HCT116 (cell line): ENCODE measurements at regions of chr17 and their contacts with region 1.

Region 1: GRCh38 chr17:60599620-60600489 is at the start of gene PPM1D:
- DNase-seq: peak; percentile 99
- ATAC-seq: peak; percentile 91
- H3K4me3 ChIP-seq: peak within 1 kb of the TSS; percentile 79 to 89
- H3K27ac ChIP-seq: peak within 1 kb of the TSS; percentile 82
- H3K4me1 ChIP-seq: peaks cover 21 to 48% of the 10 kb centered on the region in 2 experiments
- H3K27me3 ChIP-seq: no peaks in the 10 kb centered on the region
- CTCF ChIP-seq: no peak
- POLR2A ChIP-seq: peak; percentile 96
- RAD21 ChIP-seq: no peak
- total RNA-seq, gene PPM1D: 29.1 TPM

Region 2: GRCh38 chr17:60142872-60143499 is 456.9 kb before region 1 on chr17:
- CTCF ChIA-PET with region 1: no interaction called
- POLR2A ChIA-PET with region 1: no interaction called
- RAD21 ChIA-PET with region 1: no interaction called
- intact Hi-C with region 1: loop called (anchors 10 kb)
- DNase-seq: peak; percentile 82
- ATAC-seq: peak; percentile 88
- H3K4me3 ChIP-seq: peak overlapping the region; percentile 15 to 26
- H3K27ac ChIP-seq: no peak overlapping the region
- H3K4me1 ChIP-seq: peaks cover 18 to 26% of the 10 kb centered on the region in 2 experiments
- H3K27me3 ChIP-seq: no peaks in the 10 kb centered on the region
- CTCF ChIP-seq: peak; percentile 91 to 96 (median 93)
- POLR2A ChIP-seq: no peak
- RAD21 ChIP-seq: peak; percentile 96

Region 3: GRCh38 chr17:60392042-60392844 is 207.6 kb before region 1 on chr17 and contains the start of gene USP32:
- CTCF ChIA-PET with region 1: no interaction called
- POLR2A ChIA-PET with region 1: interaction called, 3 read pairs
- RAD21 ChIA-PET with region 1: no interaction called
- intact Hi-C with region 1: loop called (anchors 1 kb)
- DNase-seq: peak; percentile 96
- ATAC-seq: peak; percentile 92
- H3K4me3 ChIP-seq: peak within 1 kb of the TSS; percentile 80 to 87
- H3K27ac ChIP-seq: peak within 1 kb of the TSS; percentile 94
- H3K4me1 ChIP-seq: peaks cover 19 to 32% of the 10 kb centered on the region in 2 experiments
- H3K27me3 ChIP-seq: no peaks in the 10 kb centered on the region
- CTCF ChIP-seq: peak in 1 of 3 experiments; percentile 39; a peak in 3 of 6 replicates
- POLR2A ChIP-seq: peak; percentile 71
- RAD21 ChIP-seq: no peak
- total RNA-seq, gene USP32: 67.0 TPM

Region 4: GRCh38 chr17:60573201-60574051 is 26.4 kb before region 1 on chr17:
- CTCF ChIA-PET with region 1: interaction called, 12 read pairs
- POLR2A ChIA-PET with region 1: interaction called, 3 read pairs
- RAD21 ChIA-PET with region 1: interaction called in 1 of 2 experiments, 5 read pairs
- intact Hi-C with region 1: no loop called
- DNase-seq: no peak
- ATAC-seq: no peak
- H3K4me3 ChIP-seq: no peak overlapping the region
- H3K27ac ChIP-seq: no peak overlapping the region
- H3K4me1 ChIP-seq: no peaks in the 10 kb centered on the region
- H3K27me3 ChIP-seq: no peaks in the 10 kb centered on the region
- CTCF ChIP-seq: no peak
- POLR2A ChIP-seq: no peak
- RAD21 ChIP-seq: no peak

Region 5: DNA sequence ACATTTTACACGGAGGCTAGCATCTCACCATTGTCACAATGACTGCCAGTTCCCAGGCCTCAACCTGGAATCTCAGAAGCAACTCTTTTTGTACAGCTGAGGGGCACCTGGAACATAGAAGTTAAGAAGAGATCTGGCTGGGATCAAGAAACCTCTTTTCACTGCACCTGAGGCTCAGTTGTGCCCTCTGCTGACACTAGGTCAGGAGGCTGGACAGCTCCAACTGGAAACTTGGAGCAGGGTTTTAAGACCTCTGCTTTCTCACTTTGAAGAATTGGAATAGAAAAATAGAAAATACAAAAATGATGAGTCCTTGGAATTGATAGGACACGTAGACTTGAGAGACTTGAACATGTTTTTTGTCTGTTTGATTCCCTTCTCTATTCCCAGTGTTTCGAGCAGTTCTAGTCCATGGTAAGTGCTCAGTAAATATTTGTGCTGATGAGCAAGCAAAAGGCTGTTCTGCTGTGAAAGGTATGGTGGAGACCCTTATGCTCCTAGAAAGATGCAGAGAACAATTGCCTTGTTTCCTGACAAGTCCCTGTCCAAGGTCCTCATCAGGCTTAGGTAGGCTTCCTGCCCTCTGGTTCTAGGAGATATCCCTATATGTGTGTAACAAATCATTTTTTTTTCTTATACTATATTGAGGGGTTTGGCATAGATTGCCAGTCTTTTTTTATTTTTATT is 13.4 kb before region 1 on chr17:
- CTCF ChIA-PET with region 1: interaction called, 12 read pairs
- POLR2A ChIA-PET with region 1: interaction called, 19 read pairs
- RAD21 ChIA-PET with region 1: no interaction called
- intact Hi-C with region 1: no loop called
- DNase-seq: no peak
- ATAC-seq: peak; percentile 86
- H3K4me3 ChIP-seq: no peak overlapping the region
- H3K27ac ChIP-seq: no peak overlapping the region
- H3K4me1 ChIP-seq: peaks cover 0 to 3% of the 10 kb centered on the region in 2 experiments; a peak in 1 of 4 replicates
- H3K27me3 ChIP-seq: no peaks in the 10 kb centered on the region
- CTCF ChIP-seq: peak; percentile 48 to 56 (median 50); a peak in 5 of 6 replicates
- POLR2A ChIP-seq: no peak
- RAD21 ChIP-seq: peak; percentile 59

Region 6: DNA sequence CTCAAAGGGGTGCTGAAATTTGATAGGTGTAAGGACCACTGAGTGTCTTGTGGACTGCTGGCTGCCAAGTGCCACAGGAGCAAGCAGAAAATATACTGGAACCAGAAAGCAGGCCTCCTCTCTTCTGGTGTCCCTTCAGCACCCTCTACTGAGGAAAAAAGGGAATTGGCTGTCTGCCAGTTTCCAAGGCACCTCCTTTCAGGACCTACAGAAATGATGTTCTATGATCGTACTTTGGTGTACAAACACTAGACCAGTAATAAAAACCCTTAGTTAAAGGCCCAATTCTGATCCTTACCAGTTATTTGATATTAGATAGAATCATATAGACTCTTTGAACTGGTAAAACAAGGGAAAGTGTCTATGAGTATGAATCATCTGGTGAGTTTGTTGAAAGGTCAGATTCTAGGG is 42.0 kb after region 1 on chr17:
- CTCF ChIA-PET with region 1: interaction called, 11 read pairs
- POLR2A ChIA-PET with region 1: interaction called, 4 read pairs
- RAD21 ChIA-PET with region 1: no interaction called
- intact Hi-C with region 1: no loop called
- DNase-seq: peak; percentile 78
- ATAC-seq: peak; percentile 79
- H3K4me3 ChIP-seq: no peak overlapping the region
- H3K27ac ChIP-seq: no peak overlapping the region
- H3K4me1 ChIP-seq: peaks cover 4 to 6% of the 10 kb centered on the region in 2 experiments; a peak in 3 of 4 replicates
- H3K27me3 ChIP-seq: no peaks in the 10 kb centered on the region
- CTCF ChIP-seq: peak; percentile 46 to 80 (median 67); a peak in 5 of 6 replicates
- POLR2A ChIP-seq: no peak
- RAD21 ChIP-seq: peak; percentile 64

Region 7: DNA sequence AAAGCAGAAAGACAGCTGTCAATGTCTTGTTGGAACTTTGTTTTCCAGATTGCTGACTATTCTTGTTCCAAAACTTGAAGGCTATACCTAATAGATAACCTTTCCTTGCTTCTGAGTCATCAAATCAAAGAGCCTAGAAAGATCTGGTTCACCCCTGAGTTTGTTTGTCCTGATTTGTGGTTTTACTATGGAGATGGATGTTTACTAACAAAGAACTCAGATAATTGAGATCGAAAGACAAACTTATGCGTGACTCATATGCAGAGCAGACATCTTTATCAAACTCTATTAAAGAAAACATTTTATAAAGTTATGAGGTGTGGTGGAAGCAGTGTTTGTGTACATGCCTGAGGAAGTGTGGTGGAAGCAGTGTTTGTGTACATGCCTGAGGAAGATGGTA is 488.7 kb after region 1 on chr17:
- CTCF ChIA-PET with region 1: no interaction called
- POLR2A ChIA-PET with region 1: no interaction called
- RAD21 ChIA-PET with region 1: no interaction called
- intact Hi-C with region 1: no loop called
- DNase-seq: no peak
- ATAC-seq: no peak
- H3K4me3 ChIP-seq: no peak overlapping the region
- H3K27ac ChIP-seq: no peak overlapping the region
- H3K4me1 ChIP-seq: no peaks in the 10 kb centered on the region
- H3K27me3 ChIP-seq: no peaks in the 10 kb centered on the region
- CTCF ChIP-seq: no peak
- POLR2A ChIP-seq: no peak
- RAD21 ChIP-seq: no peak